HEK293 (cell line): ENCODE measurements at regions of chr15 and their contacts with region 1.

Region 1: DNA sequence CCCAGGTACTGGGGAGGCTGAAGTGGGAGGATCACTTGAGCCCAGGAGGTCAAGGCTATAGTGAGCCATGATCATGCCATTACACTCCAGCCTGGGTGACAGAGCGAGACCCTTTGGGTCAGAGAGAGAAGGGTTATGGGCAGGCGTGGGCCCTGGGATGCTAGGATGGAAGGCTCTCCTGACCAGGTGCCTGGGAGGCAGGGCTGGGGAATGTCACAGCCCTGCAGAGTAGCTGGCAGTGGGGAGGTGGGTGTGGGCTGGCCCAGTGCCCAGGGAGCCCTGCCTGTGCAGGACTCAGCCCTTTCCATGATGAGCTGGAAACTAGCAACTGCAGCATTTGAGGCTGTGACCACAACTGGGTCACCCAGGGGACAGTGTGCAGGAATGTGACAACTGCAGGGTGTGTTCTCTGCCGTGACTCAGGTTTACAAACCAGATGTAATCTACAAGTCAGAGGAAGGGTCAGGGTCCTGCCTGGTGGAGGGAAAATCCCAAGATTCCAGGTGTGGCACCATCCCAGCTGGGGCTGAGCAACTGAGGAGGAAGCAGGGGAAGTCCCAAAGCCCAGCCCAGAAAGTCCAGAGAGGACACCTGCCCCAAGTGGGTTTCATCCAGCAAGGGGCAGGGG is 45.4 kb downstream of the SLC28A1 start:
- H3K4me3 ChIP-seq: no peak overlapping the region
- H3K27ac ChIP-seq: no peak overlapping the region
- H3K4me1 ChIP-seq: no peaks in the 10 kb centered on the region
- CTCF ChIP-seq: no peak

Region 2: GRCh38 chr15:84600851-84601838 is 328.7 kb before region 1 on chr15 and contains the start of gene ZSCAN2:
- CTCF ChIA-PET with region 1: interaction called, 12 read pairs
- POLR2A ChIA-PET with region 1: no interaction called
- H3K4me3 ChIP-seq: peak within 1 kb of the TSS; percentile 75
- H3K27ac ChIP-seq: peak within 1 kb of the TSS; percentile 64; the same call in 1 of the 2 replicates
- H3K4me1 ChIP-seq: peaks cover 16% of the 10 kb centered on the region
- CTCF ChIP-seq: peak; percentile 75

Region 3: GRCh38 chr15:84839689-84840654 is 89.9 kb before region 1 on chr15:
- CTCF ChIA-PET with region 1: interaction called, 24 read pairs
- POLR2A ChIA-PET with region 1: interaction called, 3 read pairs
- H3K4me3 ChIP-seq: no peak overlapping the region
- H3K27ac ChIP-seq: no peak overlapping the region
- H3K4me1 ChIP-seq: no peaks in the 10 kb centered on the region
- CTCF ChIP-seq: no peak

Region 4: DNA sequence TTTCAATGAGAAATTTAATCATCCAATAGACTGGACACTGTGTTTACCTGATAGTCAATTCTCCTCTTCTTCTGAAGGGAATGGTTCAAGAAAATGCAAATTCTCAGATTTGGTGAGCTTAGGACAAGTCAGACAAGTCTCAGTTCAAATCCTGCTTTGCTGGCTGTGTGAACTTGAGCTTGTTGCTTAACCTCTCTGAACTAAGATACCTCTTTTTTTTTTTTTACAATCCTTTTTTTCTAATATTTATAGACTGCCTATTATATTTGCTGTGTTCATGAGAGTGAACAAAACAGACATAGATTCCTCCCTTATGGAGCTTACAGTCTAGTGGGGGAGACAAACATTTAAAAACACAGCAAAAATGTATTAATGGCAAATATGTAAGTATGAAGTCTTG is 53.6 kb before region 1 on chr15:
- CTCF ChIA-PET with region 1: interaction called, 11 read pairs
- POLR2A ChIA-PET with region 1: no interaction called
- H3K4me3 ChIP-seq: no peak overlapping the region
- H3K27ac ChIP-seq: no peak overlapping the region
- H3K4me1 ChIP-seq: no peaks in the 10 kb centered on the region
- CTCF ChIP-seq: no peak

Region 5: DNA sequence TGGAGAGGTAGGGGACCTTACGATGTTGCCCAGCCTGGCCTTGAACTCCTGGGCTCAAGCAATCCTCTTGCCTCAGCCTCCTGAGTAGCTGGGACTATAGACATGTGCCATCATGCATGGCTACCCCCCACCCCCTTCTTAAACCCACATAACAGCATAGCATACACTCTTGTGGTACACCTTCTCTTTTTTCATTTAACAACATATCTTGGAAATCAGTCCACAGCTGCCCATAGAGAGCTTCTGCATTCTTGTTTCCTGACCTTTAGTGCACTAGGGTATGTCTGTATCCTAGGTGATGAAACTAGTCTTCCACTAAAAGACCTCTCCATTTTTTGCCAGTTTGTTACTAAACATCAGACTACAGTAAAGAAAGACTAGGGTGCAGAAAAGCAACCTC is 12.4 kb before region 1 on chr15:
- CTCF ChIA-PET with region 1: interaction called, 10 read pairs
- POLR2A ChIA-PET with region 1: interaction called, 3 read pairs
- H3K4me3 ChIP-seq: no peak overlapping the region
- H3K27ac ChIP-seq: no peak overlapping the region
- H3K4me1 ChIP-seq: peaks cover 12% of the 10 kb centered on the region
- CTCF ChIP-seq: no peak

Region 6: DNA sequence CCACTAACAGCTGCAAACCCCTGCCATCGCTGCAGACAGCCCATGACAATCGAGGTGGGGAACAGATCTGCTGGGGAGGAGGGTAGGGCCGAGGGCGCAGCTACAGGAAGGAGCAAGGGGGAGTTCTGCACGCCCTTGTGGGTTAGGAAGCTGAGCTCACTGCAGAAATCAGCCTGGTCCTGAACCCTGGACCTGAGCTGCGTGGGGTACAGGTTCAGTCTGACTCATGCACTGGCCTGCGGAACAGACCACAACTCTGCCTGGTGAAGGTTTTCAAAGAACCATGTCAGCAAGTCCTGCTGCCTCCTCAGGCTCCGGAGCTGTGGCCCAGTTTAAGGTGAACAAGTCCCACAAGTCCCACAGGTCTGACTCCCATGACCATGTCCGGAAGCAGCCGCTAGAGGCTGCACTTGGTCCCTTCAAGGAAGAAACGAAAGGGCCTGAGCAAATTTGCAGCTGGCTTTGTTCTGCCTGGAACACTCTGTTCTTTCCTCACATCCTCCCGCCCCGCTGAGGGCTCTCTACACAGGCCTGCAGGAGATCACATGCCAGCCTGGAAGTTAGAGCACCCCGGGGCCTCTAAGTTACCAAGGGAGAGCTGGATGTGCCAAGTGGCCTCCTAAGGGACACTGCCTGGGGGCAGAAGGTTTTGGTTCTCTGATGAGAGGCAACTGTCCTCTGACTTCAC is 401.2 kb after region 1 on chr15:
- CTCF ChIA-PET with region 1: no interaction called
- POLR2A ChIA-PET with region 1: no interaction called
- H3K4me3 ChIP-seq: no peak overlapping the region
- H3K27ac ChIP-seq: no peak overlapping the region
- H3K4me1 ChIP-seq: 0 out of 2 replicates have a peak, but pooled peaks cover 2% of the 10 kb centered on the region
- CTCF ChIP-seq: peak; percentile 27; the same call in 1 of the 2 replicates